Right cardiac atrium (tissue), 5 donors: ENCODE measurements at regions of chr7 and their contacts with region 1.

Region 1: DNA sequence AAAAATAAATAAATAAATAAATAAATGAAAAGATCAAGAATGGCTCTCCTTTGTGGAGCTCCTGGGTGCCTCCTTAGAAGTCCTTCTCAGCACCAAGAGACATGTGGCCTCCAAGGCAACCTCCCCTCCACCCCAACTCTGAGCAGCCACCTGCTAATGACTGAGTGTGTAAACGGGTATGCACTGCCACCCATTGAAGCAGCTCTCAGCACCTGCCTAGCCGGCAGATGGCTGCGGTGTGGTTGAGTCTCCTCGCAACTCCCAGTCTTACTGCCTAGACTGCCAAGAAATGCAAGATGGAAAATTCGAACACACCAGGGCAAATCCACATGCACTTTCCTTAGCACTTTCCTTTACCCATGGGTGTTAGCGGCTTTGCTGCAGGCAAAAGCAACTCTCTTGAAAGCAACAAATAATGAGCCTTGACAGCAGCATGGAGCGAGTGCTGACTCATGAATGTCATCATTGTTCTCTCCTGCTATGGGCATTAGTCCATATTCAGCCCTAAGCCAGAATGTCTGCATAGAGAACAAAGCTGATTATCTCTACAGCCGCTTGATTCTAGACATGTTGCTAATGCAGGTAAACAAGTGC is 913.9 kb upstream of the AUTS2 start:
- DNase-seq: no peak
- ATAC-seq: no peak
- H3K4me3 ChIP-seq: no peak overlapping the region
- H3K27ac ChIP-seq: no peak overlapping the region
- H3K4me1 ChIP-seq: no peaks in the 10 kb centered on the region
- H3K27me3 ChIP-seq: no peaks in the 10 kb centered on the region

Region 2: DNA sequence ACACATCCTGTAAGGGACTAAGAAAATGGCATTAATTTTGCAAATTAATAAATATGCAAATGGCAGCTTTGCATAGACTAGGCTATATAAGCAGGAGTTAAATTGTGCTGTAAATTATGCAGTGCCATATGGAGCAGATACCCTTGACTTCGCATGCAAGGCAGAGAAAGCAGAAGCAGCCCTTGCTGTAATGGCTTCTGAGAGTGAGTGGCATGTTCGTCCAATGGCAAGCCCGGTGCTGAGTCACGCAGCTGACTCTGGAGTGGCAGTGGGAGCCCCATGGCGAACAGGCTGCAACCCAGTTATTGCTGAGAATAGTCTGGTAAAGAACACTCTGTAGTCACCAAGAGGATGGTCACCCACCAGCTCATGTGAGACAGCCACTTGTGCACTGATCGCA is 501.2 kb before region 1 on chr7:
- intact Hi-C with region 1: loop called in 1 of 4 experiments (anchors 5 kb)
- DNase-seq: no peak
- ATAC-seq: no peak
- H3K4me3 ChIP-seq: no peak overlapping the region
- H3K27ac ChIP-seq: no peak overlapping the region
- H3K4me1 ChIP-seq: no peaks in the 10 kb centered on the region
- H3K27me3 ChIP-seq: no peaks in the 10 kb centered on the region

Region 3: GRCh38 chr7:68733219-68734148 is 49.1 kb after region 1 on chr7:
- intact Hi-C with region 1: no loop called
- DNase-seq: no peak
- ATAC-seq: peak in 1 of 2 donors; percentile 24
- H3K4me3 ChIP-seq: no peak overlapping the region
- H3K27ac ChIP-seq: no peak overlapping the region
- H3K4me1 ChIP-seq: no peaks in the 10 kb centered on the region
- H3K27me3 ChIP-seq: no peaks in the 10 kb centered on the region